Gastrocnemius medialis (tissue), 4 donors: ENCODE measurements at regions of chrX and their contacts with region 1.

Region 1: GRCh38 chrX:105695451-105695850 is 126.9 kb upstream of the NRK start:
- DNase-seq: no peak
- ATAC-seq: no peak
- H3K4me3 ChIP-seq: no peak overlapping the region
- H3K27ac ChIP-seq: no peak overlapping the region
- H3K4me1 ChIP-seq: peaks cover 0 to 6% of the 10 kb centered on the region in 2 donors
- H3K27me3 ChIP-seq: peaks cover 0 to 3% (median 0%) of the 10 kb centered on the region in 3 donors
- CTCF ChIP-seq: no peak
- POLR2A ChIP-seq: no peak

Region 2: DNA sequence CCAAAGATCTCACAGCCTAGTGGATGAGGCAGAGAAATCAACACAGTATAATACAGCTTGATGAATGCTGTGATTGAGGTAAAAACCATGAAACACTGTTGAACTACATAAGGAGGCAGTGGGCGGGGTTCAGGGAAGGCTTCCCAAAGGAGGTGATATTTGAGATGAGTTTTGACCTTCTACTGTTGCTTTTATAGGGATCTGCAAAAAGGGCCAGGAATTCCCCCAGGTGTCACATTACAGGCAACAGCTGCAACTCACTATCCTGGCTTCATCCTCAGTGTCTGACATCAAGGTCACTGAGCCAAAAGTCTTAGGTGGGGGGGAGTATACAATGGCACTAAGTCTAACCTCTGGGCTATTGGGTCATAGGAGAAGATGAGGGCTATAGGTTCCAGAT is 58.8 kb before region 1 on chrX:
- in situ Hi-C with region 1: no loop called
- intact Hi-C with region 1: loop called (anchors 10 kb)
- DNase-seq: peak; percentile 5 to 56
- ATAC-seq: peak; percentile 78 to 98
- H3K4me3 ChIP-seq: no peak overlapping the region
- H3K27ac ChIP-seq: peak overlapping the region in 1 of 4 donors; percentile 22
- H3K4me1 ChIP-seq: peaks cover 6 to 32% of the 10 kb centered on the region in 2 donors
- H3K27me3 ChIP-seq: peaks cover 0 to 3% (median 0%) of the 10 kb centered on the region in 3 donors
- CTCF ChIP-seq: no peak
- POLR2A ChIP-seq: no peak